CD8-positive, alpha-beta T cell (primary cell): ENCODE measurements at regions of chr3 and their contacts with region 1.

Region 1: DNA sequence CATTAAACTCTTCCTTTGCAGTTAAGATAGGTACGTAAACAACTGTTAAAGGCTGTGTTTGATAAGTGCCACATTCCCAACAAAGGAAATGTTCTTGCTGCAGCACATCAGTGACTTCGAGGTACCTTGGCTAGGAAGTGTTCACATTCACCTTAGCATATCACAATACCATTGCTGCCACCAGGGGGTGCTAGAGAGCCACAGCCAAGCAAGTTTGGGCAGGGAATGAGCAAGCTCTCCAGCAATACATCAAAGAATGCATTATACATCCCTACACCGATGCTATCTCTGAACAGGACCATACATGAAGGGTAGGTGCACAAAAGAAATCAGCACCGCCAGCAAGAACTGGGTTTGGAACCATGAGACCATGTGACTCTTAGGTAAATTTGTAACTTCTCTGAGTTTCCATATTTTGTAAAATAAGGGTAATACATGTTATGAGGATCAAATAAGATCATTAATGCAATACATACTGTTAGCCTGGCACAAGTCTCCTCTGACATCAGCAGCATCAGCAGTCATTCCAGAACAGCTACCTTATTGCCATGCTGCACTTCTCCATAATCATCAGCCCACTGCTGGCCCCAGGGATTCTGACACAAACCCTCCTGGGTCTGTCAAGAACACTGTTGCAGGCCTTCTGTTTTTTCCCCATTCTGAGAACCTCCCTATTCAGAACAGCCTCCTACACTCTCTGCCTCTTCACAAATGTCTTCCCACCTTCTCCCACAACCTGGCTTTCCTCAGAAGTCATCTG is 37.6 kb downstream of the RYK start:
- DNase-seq: peak; percentile 71 to 95 (median 83)
- ATAC-seq: peak; percentile 91
- H3K4me3 ChIP-seq: no peak overlapping the region
- H3K4me3 Mint-ChIP-seq: no peak overlapping the region
- H3K27ac ChIP-seq: no peak overlapping the region
- H3K27ac Mint-ChIP-seq: no peak overlapping the region
- H3K4me1 ChIP-seq: no peaks in the 10 kb centered on the region
- H3K4me1 Mint-ChIP-seq: peaks cover 38% of the 10 kb centered on the region
- H3K27me3 ChIP-seq: no peaks in the 10 kb centered on the region
- H3K27me3 Mint-ChIP-seq: no peaks in the 10 kb centered on the region
- CTCF ChIP-seq: peak; percentile 93

Region 2: DNA sequence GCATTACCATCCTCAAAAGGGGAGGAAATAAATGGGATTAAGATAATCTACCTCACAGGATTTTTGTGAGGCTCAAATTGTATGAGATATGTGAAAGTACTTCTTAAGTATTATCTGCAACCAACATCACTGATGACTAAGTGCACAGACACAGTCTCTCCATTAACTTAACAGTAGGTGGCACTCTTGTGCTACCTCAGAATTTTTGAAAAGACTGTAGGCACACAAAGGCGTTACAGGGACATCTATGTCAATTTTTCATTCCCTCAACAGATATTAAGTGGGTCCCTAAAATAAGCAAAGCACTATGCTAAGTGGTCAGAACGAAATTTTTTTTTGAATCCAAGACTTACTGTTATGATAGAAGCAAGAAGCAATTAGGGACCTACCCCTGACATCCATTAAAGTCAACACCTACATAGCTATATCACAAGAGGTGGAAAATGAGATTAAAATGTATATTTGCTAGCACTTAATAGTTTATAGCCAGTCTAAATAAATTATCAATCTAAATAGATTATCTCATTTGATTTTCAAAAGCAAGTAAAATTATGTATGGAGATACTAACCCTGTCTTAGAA is 15.3 kb before region 1 on chr3:
- CTCF ChIA-PET with region 1: interaction called, 18 read pairs
- POLR2A ChIA-PET with region 1: no interaction called
- intact Hi-C with region 1: no loop called
- DNase-seq: peak in 2 of 9 experiments; percentile 57 to 64
- ATAC-seq: peak; percentile 71
- H3K4me3 ChIP-seq: no peak overlapping the region
- H3K4me3 Mint-ChIP-seq: no peak overlapping the region
- H3K27ac ChIP-seq: no peak overlapping the region
- H3K27ac Mint-ChIP-seq: no peak overlapping the region
- H3K4me1 ChIP-seq: no peaks in the 10 kb centered on the region
- H3K4me1 Mint-ChIP-seq: peaks cover 2% of the 10 kb centered on the region
- H3K27me3 ChIP-seq: no peaks in the 10 kb centered on the region
- H3K27me3 Mint-ChIP-seq: no peaks in the 10 kb centered on the region
- CTCF ChIP-seq: peak; percentile 71

Region 3: GRCh38 chr3:134250717-134251220 is 37.7 kb after region 1 on chr3 and contains the start of gene RYK:
- CTCF ChIA-PET with region 1: interaction called, 9 read pairs
- POLR2A ChIA-PET with region 1: interaction called, 4 read pairs
- intact Hi-C with region 1: loop called in 1 of 2 experiments (anchors 1 kb)
- DNase-seq: peak; percentile 50 to 89 (median 73)
- ATAC-seq: peak; percentile 74
- H3K4me3 ChIP-seq: peak within 1 kb of the TSS; percentile 76 to 86
- H3K4me3 Mint-ChIP-seq: peak within 1 kb of the TSS; percentile 94
- H3K27ac ChIP-seq: peak within 1 kb of the TSS; percentile 65 to 68
- H3K27ac Mint-ChIP-seq: peak within 1 kb of the TSS; percentile 94
- H3K4me1 ChIP-seq: peaks cover 17% of the 10 kb centered on the region
- H3K4me1 Mint-ChIP-seq: peaks cover 44% of the 10 kb centered on the region
- H3K27me3 ChIP-seq: no peaks in the 10 kb centered on the region
- H3K27me3 Mint-ChIP-seq: no peaks in the 10 kb centered on the region
- CTCF ChIP-seq: no peak
- total RNA-seq, gene RYK: 63.6 to 64.7 TPM

Region 4: GRCh38 chr3:134308350-134308891 is 95.3 kb after region 1 on chr3:
- CTCF ChIA-PET with region 1: interaction called, 24 read pairs
- POLR2A ChIA-PET with region 1: no interaction called
- intact Hi-C with region 1: loop called in 1 of 2 experiments (anchors 2 kb)
- DNase-seq: peak; percentile 48 to 81 (median 72)
- ATAC-seq: peak; percentile 92
- H3K4me3 ChIP-seq: no peak overlapping the region
- H3K4me3 Mint-ChIP-seq: peak overlapping the region; percentile 19
- H3K27ac ChIP-seq: no peak overlapping the region
- H3K27ac Mint-ChIP-seq: no peak overlapping the region
- H3K4me1 ChIP-seq: no peaks in the 10 kb centered on the region
- H3K4me1 Mint-ChIP-seq: peaks cover 3% of the 10 kb centered on the region
- H3K27me3 ChIP-seq: peaks cover 0 to 4% of the 10 kb centered on the region in 2 experiments
- H3K27me3 Mint-ChIP-seq: peaks cover 16% of the 10 kb centered on the region
- CTCF ChIP-seq: peak; percentile 99

Region 5: GRCh38 chr3:134473868-134474546 is 260.9 kb after region 1 on chr3:
- CTCF ChIA-PET with region 1: interaction called, 55 read pairs
- POLR2A ChIA-PET with region 1: interaction called, 3 read pairs
- intact Hi-C with region 1: loop called (anchors 1 kb)
- DNase-seq: peak; percentile 55 to 85 (median 75)
- ATAC-seq: peak; percentile 85
- H3K4me3 ChIP-seq: no peak overlapping the region
- H3K4me3 Mint-ChIP-seq: no peak overlapping the region
- H3K27ac ChIP-seq: no peak overlapping the region
- H3K27ac Mint-ChIP-seq: no peak overlapping the region
- H3K4me1 ChIP-seq: peaks cover 4% of the 10 kb centered on the region
- H3K4me1 Mint-ChIP-seq: peaks cover 5% of the 10 kb centered on the region
- H3K27me3 ChIP-seq: no peaks in the 10 kb centered on the region
- H3K27me3 Mint-ChIP-seq: no peaks in the 10 kb centered on the region
- CTCF ChIP-seq: peak; percentile 83